Activated naive CD4-positive, alpha-beta T cell treated with anti-CD3 and anti-CD28 coated beads for 36 hours (primary cell): ENCODE measurements at regions of chr2 and their contacts with region 1.

Region 1: DNA sequence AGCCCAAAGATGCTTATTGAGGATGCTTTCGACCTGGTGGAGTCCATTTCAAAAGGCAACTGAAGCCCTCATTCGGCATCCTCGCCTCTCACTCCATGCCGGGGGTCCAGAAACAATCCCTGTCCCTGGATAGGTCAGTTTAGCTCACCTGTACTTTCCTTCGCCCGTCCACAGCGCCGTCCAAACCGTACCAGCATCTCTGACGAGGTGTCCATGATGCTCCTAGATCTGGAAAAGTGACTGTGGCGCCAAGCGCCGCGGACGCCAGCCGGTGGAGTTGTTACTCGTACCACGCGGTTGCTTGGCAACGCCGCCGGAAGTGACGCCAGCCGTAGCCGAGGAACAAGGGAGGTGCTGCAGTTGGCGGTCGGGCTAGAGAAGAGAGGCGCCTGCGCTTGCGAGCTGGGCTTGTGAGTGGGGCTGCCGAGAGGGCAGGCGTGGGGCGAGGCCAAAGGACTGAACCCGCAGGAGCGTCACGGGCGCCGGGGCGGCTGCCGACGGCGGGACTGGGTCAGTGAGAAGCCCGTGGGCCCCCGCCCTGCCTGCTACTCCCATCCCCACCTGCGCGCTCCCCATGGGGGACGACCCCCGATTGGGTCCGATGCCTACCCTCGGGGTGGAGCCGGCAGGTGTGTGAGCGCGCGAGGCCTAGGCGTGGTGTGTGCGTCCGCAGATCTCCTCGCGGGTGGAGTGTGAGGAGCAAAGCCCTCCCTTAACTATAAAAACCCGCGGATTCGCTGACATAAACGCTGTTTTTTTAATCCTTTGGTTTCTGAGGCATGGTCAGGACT is at the starts of genes CFAP210 and PHOSPHO2:
- DNase-seq: peak; percentile 98
- H3K4me3 Mint-ChIP-seq: peak within 1 kb of the TSS; percentile 84
- H3K27ac Mint-ChIP-seq: peak within 1 kb of the TSS; percentile 71
- H3K4me1 Mint-ChIP-seq: peaks cover 13% of the 10 kb centered on the region
- H3K27me3 Mint-ChIP-seq: no peaks in the 10 kb centered on the region
- total RNA-seq, gene CFAP210: not detected
- total RNA-seq, gene PHOSPHO2: 1.2 TPM

Region 2: GRCh38 chr2:169363560-169364150 is 330.7 kb before region 1 on chr2:
- CTCF ChIA-PET with region 1: no interaction called
- intact Hi-C with region 1: loop called (anchors 10 kb)
- DNase-seq: peak; percentile 63
- H3K4me3 Mint-ChIP-seq: peak overlapping the region; percentile 84
- H3K27ac Mint-ChIP-seq: peak overlapping the region; percentile 57
- H3K4me1 Mint-ChIP-seq: peaks cover 32% of the 10 kb centered on the region
- H3K27me3 Mint-ChIP-seq: peaks cover 31% of the 10 kb centered on the region

Region 3: GRCh38 chr2:169528271-169528701 is 166.0 kb before region 1 on chr2:
- CTCF ChIA-PET with region 1: no interaction called
- intact Hi-C with region 1: loop called (anchors 1 kb)
- DNase-seq: peak; percentile 86
- H3K4me3 Mint-ChIP-seq: no peak overlapping the region
- H3K27ac Mint-ChIP-seq: no peak overlapping the region
- H3K4me1 Mint-ChIP-seq: no peaks in the 10 kb centered on the region
- H3K27me3 Mint-ChIP-seq: no peaks in the 10 kb centered on the region

Region 4: DNA sequence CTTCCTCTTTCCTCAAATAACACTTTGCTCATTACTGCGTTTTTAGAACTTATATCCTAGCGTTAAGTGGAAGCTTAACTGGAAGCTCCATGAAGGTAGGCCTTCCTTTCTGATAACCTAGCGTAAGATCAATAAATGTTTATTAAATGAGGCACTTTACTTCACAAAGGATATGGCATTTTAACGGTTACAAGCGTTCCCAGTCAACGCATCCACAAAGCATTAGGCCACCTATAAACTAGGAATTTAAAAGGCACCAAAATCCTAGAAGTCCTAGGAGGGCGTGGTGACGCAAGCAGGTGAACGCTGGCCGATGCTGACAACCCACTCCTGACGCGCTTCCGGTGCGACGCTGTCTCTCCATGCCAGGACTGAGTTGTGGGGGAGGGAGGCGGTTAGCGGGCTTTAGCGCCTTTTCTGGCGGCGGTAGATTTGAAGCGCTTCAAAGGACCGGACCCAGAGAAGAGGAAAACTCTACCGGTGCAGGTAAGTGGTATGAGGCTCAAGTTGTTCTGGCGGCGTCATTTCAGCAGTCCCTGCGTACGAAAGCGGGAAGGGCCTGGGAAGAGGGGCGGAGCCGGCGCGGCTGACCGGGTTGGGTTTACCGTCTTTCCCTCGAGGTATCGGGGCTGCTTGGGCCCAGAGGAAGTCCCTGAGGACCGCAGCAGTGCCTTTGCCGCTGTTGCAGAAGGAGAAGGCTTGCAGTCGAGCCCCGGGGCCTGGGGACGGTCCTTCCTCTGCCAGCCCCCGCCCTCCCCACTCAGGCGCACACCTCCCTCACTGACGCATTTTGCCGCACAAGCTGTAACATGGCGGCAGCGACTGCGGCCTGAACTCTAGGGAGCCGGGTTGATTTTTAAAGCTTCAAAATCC is 110.1 kb before region 1 on chr2 and contains the start of gene PPIG:
- CTCF ChIA-PET with region 1: no interaction called
- intact Hi-C with region 1: loop called (anchors 1 kb)
- DNase-seq: peak; percentile 94
- H3K4me3 Mint-ChIP-seq: peak within 1 kb of the TSS; percentile 98
- H3K27ac Mint-ChIP-seq: peak within 1 kb of the TSS; percentile 100
- H3K4me1 Mint-ChIP-seq: peaks cover 33% of the 10 kb centered on the region
- H3K27me3 Mint-ChIP-seq: no peaks in the 10 kb centered on the region
- total RNA-seq, gene PPIG: 53.4 to 56.6 TPM

Region 5: DNA sequence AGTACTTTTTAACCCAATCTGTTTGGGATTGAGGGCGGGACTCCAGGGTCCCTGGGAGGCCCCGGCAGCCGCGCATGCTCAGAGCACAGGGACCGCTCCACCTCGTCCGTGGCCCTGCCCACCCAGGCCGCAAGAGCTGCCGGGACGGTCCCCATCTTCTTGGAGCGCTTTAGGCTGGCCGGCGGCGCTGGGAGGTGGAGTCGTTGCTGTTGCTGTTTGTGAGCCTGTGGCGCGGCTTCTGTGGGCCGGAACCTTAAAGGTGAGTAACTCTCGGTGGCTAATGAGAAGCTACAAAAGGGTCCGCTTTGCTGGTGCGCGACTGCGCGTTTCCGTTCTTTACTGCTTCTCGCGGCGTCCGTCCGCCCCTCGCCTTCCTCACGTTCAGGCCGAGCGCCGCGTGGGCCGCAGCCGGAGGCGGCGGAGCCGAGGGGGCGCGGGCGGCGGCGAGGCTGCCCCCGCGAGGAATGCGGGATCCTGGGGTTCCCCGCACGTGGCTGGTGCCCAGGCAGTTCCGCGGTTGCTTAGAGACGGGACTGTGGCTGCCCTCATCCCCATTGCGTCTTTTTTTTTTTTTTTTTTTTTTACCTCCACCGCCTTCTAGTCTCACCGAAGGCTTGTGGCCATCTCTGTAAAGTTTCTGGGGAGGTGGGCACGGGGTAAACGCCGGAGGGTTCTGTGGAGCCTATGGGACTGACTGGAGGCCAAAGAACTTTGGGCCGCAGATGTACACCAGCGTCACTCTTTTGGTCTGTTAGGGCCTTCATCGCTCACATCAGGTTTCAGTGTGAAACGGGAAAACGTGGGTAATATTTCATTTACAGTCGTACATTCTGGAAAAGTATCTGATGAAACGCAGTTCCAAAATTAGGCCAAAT is 104.6 kb after region 1 on chr2 and contains the start of gene SSB:
- CTCF ChIA-PET with region 1: no interaction called
- intact Hi-C with region 1: loop called (anchors 1 kb)
- DNase-seq: peak; percentile 97
- H3K4me3 Mint-ChIP-seq: peak within 1 kb of the TSS; percentile 88
- H3K27ac Mint-ChIP-seq: peak within 1 kb of the TSS; percentile 95
- H3K4me1 Mint-ChIP-seq: peaks cover 29% of the 10 kb centered on the region
- H3K27me3 Mint-ChIP-seq: peaks cover 2% of the 10 kb centered on the region
- total RNA-seq, gene SSB: 122 to 129 TPM

Region 6: GRCh38 chr2:170005484-170006101 is 311.3 kb after region 1 on chr2:
- CTCF ChIA-PET with region 1: no interaction called
- intact Hi-C with region 1: no loop called
- DNase-seq: no peak
- H3K4me3 Mint-ChIP-seq: no peak overlapping the region
- H3K27ac Mint-ChIP-seq: no peak overlapping the region
- H3K4me1 Mint-ChIP-seq: no peaks in the 10 kb centered on the region
- H3K27me3 Mint-ChIP-seq: no peaks in the 10 kb centered on the region